ENCODE measurements at regions of chr21 and their contacts with region 1.

Region 1: GRCh38 chr21:35217504-35218060 is 168.5 kb upstream of the RUNX1 start:
- DNase-seq: peak; percentile 88
- H3K4me3 Mint-ChIP-seq: no peak overlapping the region
- H3K27ac Mint-ChIP-seq: peak overlapping the region; percentile 96
- H3K4me1 Mint-ChIP-seq: peaks cover 19% of the 10 kb centered on the region
- H3K27me3 Mint-ChIP-seq: no peaks in the 10 kb centered on the region
- CTCF ChIP-seq: no peak

Region 2: GRCh38 chr21:35198031-35198431 is 19.6 kb before region 1 on chr21:
- CTCF ChIA-PET with region 1: interaction called, 3 read pairs
- POLR2A ChIA-PET with region 1: interaction called, 21 read pairs
- intact Hi-C with region 1: no loop called
- DNase-seq: peak; percentile 90
- H3K4me3 Mint-ChIP-seq: no peak overlapping the region
- H3K27ac Mint-ChIP-seq: peak overlapping the region; percentile 74
- H3K4me1 Mint-ChIP-seq: peaks cover 30% of the 10 kb centered on the region
- H3K27me3 Mint-ChIP-seq: no peaks in the 10 kb centered on the region
- CTCF ChIP-seq: no peak

Region 3: DNA sequence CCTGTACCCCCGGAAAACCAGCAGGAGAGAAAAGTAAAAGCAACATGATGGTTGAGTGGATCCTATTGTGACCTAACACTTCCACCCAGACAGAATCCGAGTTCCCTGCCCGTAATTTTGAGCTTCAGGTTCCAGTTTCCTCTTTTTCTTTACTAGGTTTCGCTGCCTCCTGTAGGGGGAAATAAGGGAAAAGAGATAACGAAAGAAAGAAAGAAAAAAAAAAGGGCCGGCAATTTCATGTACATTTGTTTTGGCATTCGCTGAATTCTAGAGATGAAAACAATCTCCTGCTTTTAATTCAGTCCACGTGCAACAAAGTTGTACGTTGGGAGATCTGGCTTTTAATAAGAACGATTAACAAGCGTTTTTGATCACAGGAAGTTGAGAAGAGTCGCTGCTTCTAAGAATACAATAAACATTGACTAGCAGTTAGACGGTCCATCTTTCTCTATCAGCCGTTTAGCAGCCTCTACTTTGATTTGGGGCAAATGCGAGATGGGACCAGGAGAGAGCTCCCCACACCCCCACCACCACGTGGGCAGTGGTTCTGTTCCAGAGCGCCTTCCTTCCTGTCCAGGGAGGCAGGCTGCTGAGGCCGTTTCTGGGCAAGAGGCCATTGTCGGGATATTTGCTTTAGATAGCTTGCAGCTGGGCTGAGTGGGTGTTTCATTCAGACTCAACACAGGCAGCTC is 12.6 kb before region 1 on chr21:
- CTCF ChIA-PET with region 1: interaction called, 3 read pairs
- POLR2A ChIA-PET with region 1: interaction called, 13 read pairs
- intact Hi-C with region 1: no loop called
- DNase-seq: no peak
- H3K4me3 Mint-ChIP-seq: no peak overlapping the region
- H3K27ac Mint-ChIP-seq: no peak overlapping the region
- H3K4me1 Mint-ChIP-seq: peaks cover 18% of the 10 kb centered on the region
- H3K27me3 Mint-ChIP-seq: no peaks in the 10 kb centered on the region
- CTCF ChIP-seq: no peak

Region 4: DNA sequence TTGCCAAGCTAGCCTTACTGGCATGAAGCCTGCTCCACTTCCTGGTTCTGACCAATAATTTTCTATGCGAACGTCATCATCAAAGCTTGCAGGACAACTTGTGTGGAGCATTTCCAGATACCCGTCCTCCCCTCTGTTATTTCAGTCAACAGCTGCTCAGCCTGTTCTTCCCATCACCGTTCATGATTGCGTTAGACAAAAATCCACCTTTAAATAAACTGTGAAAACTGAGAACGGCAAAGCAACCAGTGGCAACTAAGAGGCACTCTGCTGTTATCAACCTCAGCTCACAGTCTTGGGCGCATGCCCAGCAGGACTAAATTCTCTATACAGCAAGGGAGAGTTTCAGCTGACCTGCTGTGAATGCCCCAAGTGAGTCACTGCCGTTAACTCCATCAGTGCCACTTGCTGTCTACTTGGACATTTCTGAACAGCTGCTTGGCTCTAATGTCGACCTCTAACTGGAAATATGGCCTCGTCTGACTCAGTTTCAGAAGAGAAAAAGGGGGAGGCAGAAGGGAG is 38.9 kb after region 1 on chr21:
- CTCF ChIA-PET with region 1: interaction called, 7 read pairs
- POLR2A ChIA-PET with region 1: interaction called, 11 read pairs
- intact Hi-C with region 1: no loop called
- DNase-seq: peak; percentile 99
- H3K4me3 Mint-ChIP-seq: peak overlapping the region; percentile 66
- H3K27ac Mint-ChIP-seq: peak overlapping the region; percentile 89
- H3K4me1 Mint-ChIP-seq: peaks cover 48% of the 10 kb centered on the region
- H3K27me3 Mint-ChIP-seq: no peaks in the 10 kb centered on the region
- CTCF ChIP-seq: no peak

Region 5: DNA sequence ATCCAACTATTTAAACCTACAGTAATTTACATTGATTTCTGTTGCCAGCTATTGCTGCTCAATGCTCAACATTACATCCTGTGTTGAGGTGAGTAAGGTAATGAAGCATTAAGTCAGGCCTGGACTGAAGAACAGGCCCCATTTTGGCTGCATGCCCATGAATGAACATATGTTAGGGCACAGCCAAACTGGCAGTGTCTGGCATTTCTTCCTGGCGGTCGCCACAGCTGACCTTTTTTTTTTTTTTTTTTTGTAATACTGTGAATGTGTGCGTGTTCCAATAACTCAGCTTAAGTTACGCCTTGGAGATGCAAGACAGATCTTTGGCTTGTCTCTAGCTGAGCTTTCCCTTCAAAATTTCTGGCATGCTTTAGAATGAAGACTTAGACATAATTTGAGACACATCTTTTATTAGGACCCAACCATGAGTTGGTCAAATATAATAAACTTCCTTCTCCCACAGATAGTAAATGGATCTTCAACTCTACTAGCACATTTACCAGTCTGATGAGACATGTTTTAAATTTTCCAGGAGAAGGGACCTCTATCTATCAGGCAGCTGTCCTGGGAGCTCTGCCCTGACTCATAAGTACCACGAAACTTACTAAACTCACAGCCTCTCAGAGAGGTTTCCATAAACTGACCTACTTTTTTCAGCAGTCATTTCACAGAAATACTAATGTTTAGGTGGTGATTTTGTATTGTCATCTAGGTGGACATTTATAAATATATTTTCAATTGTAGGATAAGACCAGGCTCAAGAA is 172.6 kb after region 1 on chr21:
- CTCF ChIA-PET with region 1: no interaction called
- POLR2A ChIA-PET with region 1: no interaction called
- intact Hi-C with region 1: loop called (anchors 10 kb)
- DNase-seq: peak; percentile 89
- H3K4me3 Mint-ChIP-seq: no peak overlapping the region
- H3K27ac Mint-ChIP-seq: peak overlapping the region; percentile 75
- H3K4me1 Mint-ChIP-seq: peaks cover 13% of the 10 kb centered on the region
- H3K27me3 Mint-ChIP-seq: no peaks in the 10 kb centered on the region
- CTCF ChIP-seq: no peak